AG04450 (cell line): ENCODE measurements at regions of chr11 and their contacts with region 1.

Region 1: GRCh38 chr11:131674051-131674755 is 303.8 kb downstream of the NTM start:
- DNase-seq: peak; percentile 74
- H3K4me3 ChIP-seq: no peak overlapping the region
- H3K27ac ChIP-seq: no peak overlapping the region
- H3K27me3 ChIP-seq: no peaks in the 10 kb centered on the region
- CTCF ChIP-seq: peak; percentile 99

Region 2: GRCh38 chr11:131025020-131025419 is 649.2 kb before region 1 on chr11:
- CTCF ChIA-PET with region 1: interaction called, 66 read pairs
- POLR2A ChIA-PET with region 1: no interaction called
- DNase-seq: peak; percentile 29
- H3K4me3 ChIP-seq: no peak overlapping the region
- H3K27ac ChIP-seq: no peak overlapping the region
- H3K27me3 ChIP-seq: no peaks in the 10 kb centered on the region
- CTCF ChIP-seq: peak; percentile 85

Region 3: GRCh38 chr11:131041331-131042040 is 632.7 kb before region 1 on chr11:
- CTCF ChIA-PET with region 1: interaction called, 22 read pairs
- POLR2A ChIA-PET with region 1: no interaction called
- DNase-seq: no peak
- H3K4me3 ChIP-seq: no peak overlapping the region
- H3K27ac ChIP-seq: no peak overlapping the region
- H3K27me3 ChIP-seq: no peaks in the 10 kb centered on the region
- CTCF ChIP-seq: no peak

Region 4: GRCh38 chr11:131579932-131580387 is 94.2 kb before region 1 on chr11:
- CTCF ChIA-PET with region 1: interaction called, 62 read pairs
- POLR2A ChIA-PET with region 1: no interaction called
- DNase-seq: no peak
- H3K4me3 ChIP-seq: no peak overlapping the region
- H3K27ac ChIP-seq: no peak overlapping the region
- H3K27me3 ChIP-seq: no peaks in the 10 kb centered on the region
- CTCF ChIP-seq: peak; percentile 62

Region 5: DNA sequence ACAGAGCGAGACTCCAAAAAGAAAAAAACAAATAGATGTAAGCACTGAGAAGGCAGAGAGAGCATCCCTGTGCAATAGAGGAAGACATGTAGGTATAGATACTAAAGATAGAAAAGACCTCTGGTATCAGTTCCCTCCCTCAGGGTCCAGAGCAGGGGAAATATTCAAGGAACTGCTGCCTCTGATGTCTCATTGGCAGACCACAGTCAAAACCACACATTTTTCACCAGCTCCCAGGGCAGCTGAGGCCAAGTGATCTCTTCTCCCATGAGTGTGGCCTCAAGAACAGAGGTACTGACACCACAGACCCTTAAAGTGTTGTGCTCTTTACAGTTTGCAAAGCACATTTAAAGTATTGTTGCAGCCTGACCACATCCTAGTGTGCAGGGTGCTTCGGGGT is 15.3 kb before region 1 on chr11:
- CTCF ChIA-PET with region 1: interaction called, 46 read pairs
- POLR2A ChIA-PET with region 1: no interaction called
- DNase-seq: no peak
- H3K4me3 ChIP-seq: no peak overlapping the region
- H3K27ac ChIP-seq: no peak overlapping the region
- H3K27me3 ChIP-seq: peaks cover 2% of the 10 kb centered on the region
- CTCF ChIP-seq: no peak

Region 6: GRCh38 chr11:131760091-131761061 is 86.2 kb after region 1 on chr11:
- CTCF ChIA-PET with region 1: interaction called, 10 read pairs
- POLR2A ChIA-PET with region 1: interaction called, 3 read pairs
- DNase-seq: no peak
- H3K4me3 ChIP-seq: no peak overlapping the region
- H3K27ac ChIP-seq: peak overlapping the region; percentile 42
- H3K27me3 ChIP-seq: no peaks in the 10 kb centered on the region
- CTCF ChIP-seq: no peak

Region 7: GRCh38 chr11:132519241-132519815 is 845.1 kb after region 1 on chr11:
- CTCF ChIA-PET with region 1: no interaction called
- POLR2A ChIA-PET with region 1: no interaction called
- DNase-seq: no peak
- H3K4me3 ChIP-seq: no peak overlapping the region
- H3K27ac ChIP-seq: no peak overlapping the region
- H3K27me3 ChIP-seq: no peaks in the 10 kb centered on the region
- CTCF ChIP-seq: no peak